ENCODE measurements at regions of chr3 and their contacts with region 1.

Region 1: DNA sequence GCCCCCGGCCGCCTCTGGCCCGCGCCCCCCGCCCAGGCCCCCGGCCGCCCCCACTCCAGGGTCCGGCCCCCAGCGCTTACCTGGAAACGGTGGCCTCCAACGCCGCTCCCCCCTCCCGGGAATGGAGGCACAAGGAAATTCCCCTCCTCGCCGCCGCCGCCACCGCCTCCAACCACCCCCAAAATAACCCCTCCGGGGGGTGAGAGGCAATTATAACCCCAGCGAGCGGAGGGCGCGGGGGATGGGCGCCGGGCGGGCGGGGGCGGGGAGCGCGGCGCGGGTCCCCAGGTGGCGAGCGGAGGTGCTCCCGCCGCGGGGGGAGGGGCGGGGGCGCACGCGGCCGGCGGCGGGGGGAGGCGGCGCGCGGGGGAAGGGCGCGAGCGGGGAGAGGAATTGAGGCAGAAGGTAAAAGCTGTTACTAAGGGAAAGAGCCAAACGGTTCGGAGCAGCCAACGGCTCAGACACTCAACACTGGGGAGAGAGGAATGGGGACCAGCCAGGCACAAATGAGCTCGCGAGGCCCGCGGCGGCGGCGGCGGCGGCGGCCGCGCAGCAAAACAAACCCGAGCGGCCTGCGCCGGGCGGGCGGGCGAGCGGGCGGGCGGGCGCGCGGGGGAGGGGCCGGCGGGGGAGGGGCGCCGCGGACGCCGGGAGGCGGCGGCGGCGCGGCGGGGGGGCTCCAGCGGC is at the start of gene TBL1XR1:
- DNase-seq: peak; percentile 90 to 94
- ATAC-seq: peak; percentile 79 to 91 (median 88)
- H3K4me3 ChIP-seq: peak within 1 kb of the TSS; percentile 64 to 92 (median 84)
- H3K27ac ChIP-seq: peak within 1 kb of the TSS; percentile 96 to 99 (median 98)
- H3K4me1 ChIP-seq: peaks cover 0 to 65% (median 25%) of the 10 kb centered on the region in 9 donors
- H3K27me3 ChIP-seq: no peaks in the 10 kb centered on the region
- CTCF ChIP-seq: no peak
- total RNA-seq, gene TBL1XR1: 79.6 to 184 (median 129) TPM

Region 2: DNA sequence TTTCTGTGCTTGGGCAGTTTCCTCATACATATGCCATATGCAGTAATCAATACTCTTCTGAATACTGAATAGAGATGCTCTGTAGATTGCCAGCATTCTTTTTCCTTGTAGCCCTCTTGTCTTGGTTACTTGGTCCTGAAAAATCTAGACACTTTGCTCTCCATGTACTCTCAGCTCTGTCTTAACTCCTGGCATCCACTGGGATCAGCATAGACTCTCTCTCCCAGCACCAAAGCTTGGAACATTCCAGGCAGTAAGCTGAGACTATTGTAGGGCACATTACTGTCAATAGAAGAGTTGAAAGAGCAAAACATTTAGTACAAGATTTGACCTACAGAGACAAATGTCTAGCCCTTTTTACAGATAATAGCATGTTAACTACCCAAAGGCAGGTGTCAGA is 1100.2 kb before region 1 on chr3:
- intact Hi-C with region 1: no loop called
- DNase-seq: no peak
- ATAC-seq: no peak
- H3K4me3 ChIP-seq: no peak overlapping the region
- H3K27ac ChIP-seq: no peak overlapping the region
- H3K4me1 ChIP-seq: no peaks in the 10 kb centered on the region
- H3K27me3 ChIP-seq: no peaks in the 10 kb centered on the region
- CTCF ChIP-seq: no peak

Region 3: GRCh38 chr3:176953106-176954060 is 243.8 kb before region 1 on chr3:
- intact Hi-C with region 1: loop called in 1 of 10 experiments (anchors 10 kb)
- DNase-seq: peak; percentile 58 to 82
- ATAC-seq: peak; percentile 91 to 96 (median 93)
- H3K4me3 ChIP-seq: no peak overlapping the region
- H3K27ac ChIP-seq: peak overlapping the region in 7 of 10 donors; percentile 9 to 71 (median 55)
- H3K4me1 ChIP-seq: peaks cover 0 to 40% (median 20%) of the 10 kb centered on the region in 9 donors
- H3K27me3 ChIP-seq: no peaks in the 10 kb centered on the region
- CTCF ChIP-seq: no peak

Region 4: DNA sequence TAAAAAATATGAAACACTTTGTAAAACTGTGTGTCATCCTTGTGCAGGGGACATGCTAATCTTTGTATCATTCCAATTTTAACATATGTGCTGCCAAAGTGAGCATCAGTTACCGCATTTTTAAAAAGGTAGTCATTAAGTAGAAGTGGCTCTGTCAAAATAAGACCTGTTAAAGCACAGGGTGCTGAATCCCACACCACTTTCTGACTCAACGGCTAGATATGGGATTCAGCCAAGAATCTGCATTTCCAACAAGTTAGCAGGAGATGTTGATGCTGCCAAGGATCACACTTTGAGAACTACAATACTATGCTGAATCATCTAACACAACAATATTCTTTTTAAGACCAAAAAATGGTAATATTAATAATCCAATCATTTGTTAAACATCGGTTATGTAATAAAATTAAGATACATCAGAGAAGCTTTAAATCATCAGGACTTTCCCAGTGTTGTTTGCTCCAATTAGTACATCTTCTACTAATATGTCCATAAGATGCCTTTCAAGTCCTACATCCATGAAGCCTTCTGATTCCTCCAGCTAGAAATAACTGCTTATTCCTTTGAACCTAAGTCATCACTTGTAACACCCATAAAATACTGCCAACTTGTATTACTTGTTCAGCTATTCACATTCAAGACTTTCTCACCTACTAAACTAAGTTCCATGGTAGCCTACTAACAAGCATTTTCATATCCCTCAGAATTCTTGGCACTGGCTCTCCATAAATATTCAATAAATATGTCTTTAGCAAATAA is 71.0 kb before region 1 on chr3:
- intact Hi-C with region 1: loop called in 2 of 10 experiments (anchors 2 to 10 kb)
- DNase-seq: peak in 1 of 2 donors; percentile 25
- ATAC-seq: peak in 7 of 8 donors; percentile 26 to 94 (median 75)
- H3K4me3 ChIP-seq: no peak overlapping the region
- H3K27ac ChIP-seq: peak overlapping the region in 7 of 10 donors; percentile 7 to 51 (median 19)
- H3K4me1 ChIP-seq: peaks cover 2 to 87% (median 60%) of the 10 kb centered on the region in 9 donors
- H3K27me3 ChIP-seq: no peaks in the 10 kb centered on the region
- CTCF ChIP-seq: no peak

Region 5: DNA sequence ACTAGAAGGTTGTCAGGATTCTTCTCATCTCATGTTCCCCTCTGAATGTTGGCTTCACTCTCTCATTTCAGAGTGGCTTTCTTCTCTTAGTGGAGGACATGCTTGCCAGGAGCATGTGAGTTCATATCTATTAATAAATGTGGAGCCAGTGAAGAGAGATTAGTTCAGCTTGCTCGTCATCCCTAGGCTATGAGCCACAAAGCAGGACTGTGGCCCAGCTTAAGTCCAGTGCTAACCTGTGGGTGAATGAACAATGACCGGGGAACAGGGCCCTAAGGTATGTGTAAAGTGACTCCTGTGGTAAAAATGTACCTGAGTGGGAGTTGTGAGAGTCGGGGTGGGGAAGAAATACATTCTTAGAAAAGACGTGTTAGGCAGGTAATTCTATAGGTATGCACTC is 97.0 kb after region 1 on chr3:
- intact Hi-C with region 1: loop called in 2 of 10 experiments (anchors 5 to 10 kb)
- DNase-seq: peak in 1 of 2 donors; percentile 86
- ATAC-seq: peak; percentile 93 to 98 (median 95)
- H3K4me3 ChIP-seq: no peak overlapping the region
- H3K27ac ChIP-seq: peak overlapping the region; percentile 35 to 95 (median 79)
- H3K4me1 ChIP-seq: peaks cover 3 to 33% (median 19%) of the 10 kb centered on the region in 9 donors
- H3K27me3 ChIP-seq: no peaks in the 10 kb centered on the region
- CTCF ChIP-seq: no peak

Region 6: DNA sequence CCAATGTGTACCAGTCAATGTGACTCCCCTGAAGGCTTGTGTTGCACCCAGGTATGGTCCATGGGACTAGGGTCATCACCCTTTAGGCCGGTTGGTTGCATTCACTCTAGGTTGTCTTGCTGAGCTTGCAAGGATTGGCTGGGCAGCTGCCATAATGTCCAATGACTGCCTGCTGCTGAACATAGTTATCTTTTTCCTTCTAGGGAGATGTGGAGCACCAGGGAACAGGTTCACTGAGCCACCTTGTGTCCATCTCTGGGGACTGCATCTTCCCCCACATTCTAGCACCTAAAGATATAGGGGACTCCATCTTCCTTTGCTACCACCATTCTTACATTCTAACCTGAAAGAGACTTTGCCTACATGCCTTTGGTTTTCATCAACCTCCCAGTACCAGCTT is 580.5 kb after region 1 on chr3:
- intact Hi-C with region 1: loop called in 1 of 10 experiments (anchors 10 kb)
- DNase-seq: peak; percentile 22 to 46
- ATAC-seq: peak in 2 of 8 donors; percentile 25 to 51
- H3K4me3 ChIP-seq: no peak overlapping the region
- H3K27ac ChIP-seq: no peak overlapping the region
- H3K4me1 ChIP-seq: peaks cover 10 to 62% (median 36%) of the 10 kb centered on the region in 9 donors
- H3K27me3 ChIP-seq: no peaks in the 10 kb centered on the region
- CTCF ChIP-seq: peak; percentile 22 to 71 (median 57)

Region 7: GRCh38 chr3:178367817-178368617 is 1170.8 kb after region 1 on chr3:
- intact Hi-C with region 1: no loop called
- DNase-seq: peak in 1 of 2 donors; percentile 48
- ATAC-seq: peak; percentile 89 to 99 (median 95)
- H3K4me3 ChIP-seq: no peak overlapping the region
- H3K27ac ChIP-seq: peak overlapping the region in 8 of 10 donors; percentile 30 to 82 (median 68)
- H3K4me1 ChIP-seq: peaks cover 0 to 12% (median 8%) of the 10 kb centered on the region in 9 donors
- H3K27me3 ChIP-seq: no peaks in the 10 kb centered on the region
- CTCF ChIP-seq: no peak

Region 8: DNA sequence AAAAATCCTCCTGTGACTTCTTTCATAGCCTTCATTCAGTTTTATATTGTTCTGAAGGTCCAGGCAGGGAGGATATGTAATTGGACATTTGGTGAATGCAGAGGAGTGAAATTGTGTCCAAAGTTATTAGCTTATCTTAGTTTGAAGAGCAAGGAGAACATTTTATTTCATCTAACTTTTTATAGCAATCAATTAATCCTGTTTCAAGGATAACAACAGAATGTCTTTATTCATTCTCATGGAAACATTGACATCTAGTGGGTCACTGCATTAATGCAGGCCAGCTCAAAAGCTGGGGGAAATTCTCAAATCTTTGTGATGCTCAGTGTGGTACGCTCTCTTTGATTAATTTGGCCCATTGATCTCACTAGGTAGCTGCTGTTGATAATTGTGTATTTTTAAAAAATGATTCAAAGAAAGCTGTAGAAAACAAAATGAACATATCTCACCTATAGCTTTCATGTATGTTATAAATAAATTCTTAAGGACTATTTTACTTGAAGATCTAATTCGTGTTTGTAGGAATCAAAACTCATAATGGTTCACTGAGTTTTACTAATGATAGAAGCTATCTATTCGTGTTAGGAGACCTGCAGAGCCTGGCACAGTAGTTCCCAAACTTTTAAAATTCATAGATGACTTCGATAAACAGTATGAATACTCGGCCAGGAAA is 1188.2 kb after region 1 on chr3:
- intact Hi-C with region 1: loop called in 1 of 10 experiments (anchors 5 kb)
- DNase-seq: no peak
- ATAC-seq: peak in 6 of 8 donors; percentile 52 to 74 (median 62)
- H3K4me3 ChIP-seq: peak overlapping the region in 2 of 10 donors; percentile 2 to 28
- H3K27ac ChIP-seq: peak overlapping the region in 6 of 10 donors; percentile 25 to 78 (median 69)
- H3K4me1 ChIP-seq: peaks cover 7 to 41% (median 30%) of the 10 kb centered on the region in 9 donors
- H3K27me3 ChIP-seq: no peaks in the 10 kb centered on the region
- CTCF ChIP-seq: peak; percentile 66 to 92 (median 86)

Measured in heart right ventricle (tissue), 16 donors.